AG04449 (cell line): ENCODE measurements at regions of chr20 and their contacts with region 1.

Region 1: DNA sequence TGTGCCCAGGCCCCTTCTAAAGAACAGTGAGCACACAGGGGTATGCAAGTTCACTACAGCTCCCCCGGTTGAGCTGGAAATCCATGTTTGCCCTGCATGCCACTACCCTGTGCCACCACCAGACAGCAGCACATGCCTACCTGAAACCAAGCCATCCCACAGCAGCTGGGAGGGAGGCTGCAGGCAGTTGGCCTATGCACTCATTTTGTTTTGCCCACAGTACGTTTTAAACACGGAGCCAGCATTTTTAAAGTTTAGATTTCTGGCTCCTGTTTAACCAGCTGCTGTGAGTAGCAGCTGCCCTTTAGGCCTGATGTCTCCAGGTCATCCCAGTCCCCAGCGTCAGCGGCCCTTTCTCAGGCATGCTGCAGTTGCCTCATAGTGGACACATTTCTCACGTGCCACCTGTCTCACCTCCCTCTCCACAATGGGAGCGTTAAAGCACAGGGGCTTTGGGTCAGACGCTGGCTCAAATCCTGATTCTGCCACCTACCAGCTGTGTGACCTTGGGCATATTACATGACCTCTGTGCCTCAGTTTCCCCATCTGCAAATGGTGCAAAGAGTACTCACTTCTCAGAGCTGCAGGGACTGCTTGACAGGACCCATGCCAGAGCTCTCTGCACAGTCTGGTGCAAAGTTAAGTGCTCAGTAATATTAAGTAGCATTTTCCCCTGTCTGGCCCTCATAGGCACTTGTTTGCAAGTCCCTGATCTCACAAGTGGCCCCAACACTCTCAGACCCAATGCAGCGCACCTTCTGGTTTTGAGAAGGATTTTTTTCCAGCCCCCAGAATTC is 8.1 kb upstream of the UBE2V1 start:
- DNase-seq: no peak
- H3K4me3 ChIP-seq: no peak overlapping the region
- CTCF ChIP-seq: peak; percentile 90

Region 2: GRCh38 chr20:49516916-49517789 is 603.9 kb before region 1 on chr20:
- CTCF ChIA-PET with region 1: no interaction called
- POLR2A ChIA-PET with region 1: no interaction called
- DNase-seq: no peak
- H3K4me3 ChIP-seq: no peak overlapping the region
- CTCF ChIP-seq: no peak

Region 3: DNA sequence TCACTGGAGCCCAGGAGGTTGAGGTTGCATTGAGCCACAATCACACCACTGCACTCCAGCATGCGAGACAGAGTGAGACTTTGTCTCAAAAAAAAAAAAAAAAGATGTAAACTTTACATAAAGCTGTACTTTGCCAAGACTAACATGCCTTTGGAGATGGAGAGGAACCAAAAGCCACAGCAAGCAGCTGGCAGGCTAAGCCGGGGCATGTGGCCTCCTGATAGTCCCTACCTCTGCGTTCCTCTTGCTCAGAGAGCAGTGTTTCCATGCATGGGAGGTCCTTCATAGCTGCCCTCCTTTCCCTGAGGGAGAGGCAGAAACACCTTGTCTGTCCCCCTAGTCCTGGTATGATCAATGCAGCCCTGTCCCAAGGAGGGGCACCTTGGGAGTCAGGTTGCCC is 240.9 kb before region 1 on chr20:
- CTCF ChIA-PET with region 1: no interaction called
- POLR2A ChIA-PET with region 1: no interaction called
- DNase-seq: peak; percentile 62
- H3K4me3 ChIP-seq: no peak overlapping the region
- CTCF ChIP-seq: no peak

Region 4: DNA sequence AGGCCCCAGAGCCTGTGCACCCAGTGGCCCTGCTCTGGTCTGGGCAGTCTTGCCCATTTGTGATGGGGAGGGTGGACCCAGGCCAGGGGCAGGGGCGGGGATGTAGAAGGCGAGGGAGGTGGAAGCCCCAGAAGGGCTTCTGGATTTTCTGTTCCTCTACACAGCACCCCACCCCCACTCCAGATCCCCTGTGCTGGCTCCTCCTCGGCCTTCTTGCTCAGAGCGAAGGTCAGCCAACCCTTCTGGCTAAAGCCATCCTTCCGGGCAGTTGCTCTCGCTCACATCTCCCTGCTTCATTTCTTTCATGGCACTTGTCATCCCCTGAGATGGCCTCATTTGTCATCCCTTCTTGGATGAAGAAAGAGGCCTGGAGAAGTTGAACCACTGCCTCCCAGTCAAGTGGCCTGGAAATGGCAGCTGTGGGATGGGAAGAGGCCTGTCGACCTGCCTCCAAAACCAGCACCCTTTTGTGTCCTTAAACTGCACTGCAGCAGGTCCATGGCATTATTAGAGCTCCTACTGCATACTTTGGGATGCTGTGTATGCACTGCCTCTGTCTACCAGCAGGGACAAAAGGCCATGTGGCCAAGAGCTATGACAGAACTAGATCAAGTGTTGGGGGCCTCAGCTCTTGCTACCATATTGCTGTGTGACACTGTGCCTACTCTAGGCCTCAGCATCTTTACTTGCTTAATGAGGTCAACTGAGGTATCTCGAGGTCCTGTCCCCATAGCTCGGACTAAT is 12.6 kb after region 1 on chr20:
- CTCF ChIA-PET with region 1: interaction called, 27 read pairs
- POLR2A ChIA-PET with region 1: interaction called, 3 read pairs
- DNase-seq: no peak
- H3K4me3 ChIP-seq: no peak overlapping the region
- CTCF ChIP-seq: no peak

Region 5: GRCh38 chr20:50153485-50154377 is 32.6 kb after region 1 on chr20 and contains the start of gene PEDS1:
- CTCF ChIA-PET with region 1: interaction called, 19 read pairs
- POLR2A ChIA-PET with region 1: interaction called, 5 read pairs
- DNase-seq: no peak
- H3K4me3 ChIP-seq: peak within 1 kb of the TSS; percentile 89
- CTCF ChIP-seq: no peak

Region 6: DNA sequence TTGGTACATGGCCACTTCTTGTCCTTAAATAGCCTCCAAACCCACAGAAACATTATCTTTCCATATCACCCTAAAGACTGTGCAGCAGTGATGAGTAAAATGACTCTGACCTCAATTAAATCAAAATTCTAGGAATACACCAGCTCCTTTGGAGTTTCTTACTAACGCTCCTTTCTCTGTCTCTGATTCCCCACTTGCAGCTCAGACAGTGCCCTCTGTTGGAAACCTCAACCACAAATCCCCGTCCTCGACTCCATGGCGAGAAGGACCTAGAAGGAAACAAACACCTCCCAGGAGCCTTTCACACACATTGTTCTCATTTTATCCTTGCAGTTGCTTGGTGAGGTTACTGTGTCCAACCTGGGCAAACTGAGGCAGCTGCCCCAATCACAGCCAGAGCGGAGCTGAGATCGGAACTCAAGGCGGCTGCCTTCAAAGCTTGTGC is 592.6 kb after region 1 on chr20:
- CTCF ChIA-PET with region 1: no interaction called
- POLR2A ChIA-PET with region 1: no interaction called
- DNase-seq: no peak
- H3K4me3 ChIP-seq: no peak overlapping the region
- CTCF ChIP-seq: peak; percentile 43